ENCODE measurements at regions of chr19 and their contacts with region 1.

Region 1: DNA sequence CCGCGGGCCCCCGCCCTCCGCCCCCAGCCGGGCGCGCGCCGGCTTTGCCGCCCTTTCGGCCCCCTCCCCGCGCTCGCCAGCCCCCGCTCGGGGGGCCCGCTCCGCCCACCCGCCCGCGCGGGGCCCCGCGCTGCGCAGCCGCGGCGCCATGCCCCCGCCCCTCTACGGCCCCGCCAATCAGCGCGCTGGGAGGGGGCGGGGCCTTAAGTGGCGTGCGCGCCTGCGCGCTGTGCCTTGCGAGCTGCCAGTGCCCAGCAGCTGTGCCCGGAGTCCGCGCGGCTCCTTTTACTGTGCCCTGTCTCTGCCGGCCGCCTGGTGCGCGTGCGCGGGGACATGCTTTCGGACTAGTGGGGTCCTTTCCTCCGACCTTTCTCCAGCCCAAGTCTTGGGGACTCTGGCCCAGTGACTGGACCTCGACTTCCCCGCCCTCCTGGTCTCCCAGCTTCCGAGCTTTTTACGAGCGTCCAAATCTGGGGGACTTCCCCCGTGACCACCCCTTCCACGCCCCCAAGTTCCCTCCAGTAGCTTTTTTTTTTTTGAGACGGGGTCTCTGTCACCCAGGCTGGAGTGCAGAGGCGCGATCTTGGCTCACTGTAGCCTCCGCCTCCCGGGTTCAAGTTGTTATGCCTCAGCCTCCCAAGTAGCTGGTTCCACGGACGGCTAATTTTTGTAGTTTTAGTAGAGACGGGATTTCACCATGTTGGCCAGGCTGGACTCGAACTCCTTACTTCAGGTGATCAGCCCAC is at the start of gene MBD3:
- DNase-seq: peak; percentile 97
- H3K4me3 Mint-ChIP-seq: peak within 1 kb of the TSS; percentile 95
- H3K27ac Mint-ChIP-seq: peak within 1 kb of the TSS; percentile 91
- H3K4me1 Mint-ChIP-seq: peaks cover 17% of the 10 kb centered on the region
- H3K27me3 Mint-ChIP-seq: no peaks in the 10 kb centered on the region
- total RNA-seq, gene MBD3: 132 and 140 TPM in 2 replicates

Region 2: DNA sequence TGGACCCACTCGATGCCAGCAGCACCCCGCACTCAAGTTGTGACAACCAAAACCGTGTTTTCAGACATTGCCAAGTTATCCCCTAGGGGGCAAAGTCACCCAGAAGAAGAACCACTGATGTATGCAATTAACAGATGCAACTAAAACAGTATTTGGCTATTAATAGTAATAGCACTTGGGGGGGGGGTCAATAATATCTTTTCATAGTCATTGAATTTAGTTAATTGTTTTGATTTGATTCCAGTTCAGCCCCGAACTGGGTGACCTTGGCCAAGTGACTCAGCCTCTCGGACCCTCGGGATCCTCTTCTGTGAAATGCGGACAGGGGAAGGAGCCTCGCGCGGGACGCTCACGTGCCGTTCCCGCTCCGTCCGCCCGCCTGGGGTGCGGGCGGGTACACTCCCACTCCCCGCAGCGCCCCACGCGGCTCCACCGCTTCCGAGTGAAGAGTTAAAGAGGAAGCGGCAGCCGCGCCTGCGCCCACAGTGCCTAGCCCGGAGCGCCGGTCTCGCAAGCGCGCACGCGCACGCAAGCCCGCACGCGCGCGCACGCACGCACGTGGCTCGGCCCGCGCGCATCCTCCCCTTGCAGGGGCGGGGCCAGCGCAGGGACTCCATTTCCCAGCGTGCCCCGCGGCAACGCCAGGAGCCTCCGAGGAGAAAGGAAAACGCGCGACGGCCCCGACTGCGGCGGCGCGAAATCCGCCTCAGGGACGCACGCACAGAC is 186.0 kb before region 1 on chr19:
- intact Hi-C with region 1: loop called (anchors 1 kb)
- DNase-seq: peak; percentile 100
- H3K4me3 Mint-ChIP-seq: peak overlapping the region; percentile 76
- H3K27ac Mint-ChIP-seq: peak overlapping the region; percentile 81
- H3K4me1 Mint-ChIP-seq: peaks cover 37% of the 10 kb centered on the region
- H3K27me3 Mint-ChIP-seq: peaks cover 6% of the 10 kb centered on the region

Region 3: DNA sequence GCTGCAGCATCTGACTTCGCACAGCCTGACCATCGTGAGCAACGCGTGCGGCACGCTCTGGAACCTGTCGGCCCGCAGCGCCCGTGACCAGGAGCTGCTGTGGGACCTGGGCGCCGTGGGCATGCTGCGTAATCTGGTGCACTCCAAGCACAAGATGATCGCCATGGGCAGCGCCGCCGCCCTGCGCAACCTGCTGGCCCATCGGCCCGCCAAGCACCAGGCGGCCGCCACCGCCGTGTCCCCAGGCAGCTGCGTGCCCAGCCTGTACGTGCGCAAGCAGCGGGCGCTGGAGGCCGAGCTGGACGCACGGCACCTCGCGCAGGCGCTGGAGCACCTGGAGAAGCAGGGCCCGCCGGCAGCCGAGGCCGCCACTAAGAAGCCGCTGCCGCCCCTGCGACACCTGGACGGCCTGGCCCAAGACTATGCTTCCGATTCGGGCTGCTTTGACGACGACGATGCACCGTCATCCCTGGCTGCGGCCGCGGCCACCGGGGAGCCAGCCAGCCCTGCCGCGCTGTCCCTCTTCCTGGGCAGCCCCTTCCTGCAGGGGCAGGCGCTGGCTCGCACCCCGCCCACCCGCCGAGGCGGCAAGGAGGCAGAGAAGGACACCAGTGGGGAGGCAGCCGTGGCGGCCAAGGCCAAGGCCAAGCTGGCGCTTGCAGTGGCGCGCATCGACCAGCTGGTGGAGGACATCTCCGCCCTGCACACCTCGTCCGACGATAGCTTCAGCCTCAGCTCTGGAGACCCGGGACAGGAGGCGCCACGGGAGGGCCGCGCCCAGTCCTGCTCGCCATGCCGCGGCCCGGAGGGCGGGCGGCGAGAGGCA is 127.5 kb before region 1 on chr19:
- intact Hi-C with region 1: no loop called
- DNase-seq: peak; percentile 72
- H3K4me3 Mint-ChIP-seq: no peak overlapping the region
- H3K27ac Mint-ChIP-seq: no peak overlapping the region
- H3K4me1 Mint-ChIP-seq: no peaks in the 10 kb centered on the region
- H3K27me3 Mint-ChIP-seq: peaks cover 1% of the 10 kb centered on the region

Region 4: DNA sequence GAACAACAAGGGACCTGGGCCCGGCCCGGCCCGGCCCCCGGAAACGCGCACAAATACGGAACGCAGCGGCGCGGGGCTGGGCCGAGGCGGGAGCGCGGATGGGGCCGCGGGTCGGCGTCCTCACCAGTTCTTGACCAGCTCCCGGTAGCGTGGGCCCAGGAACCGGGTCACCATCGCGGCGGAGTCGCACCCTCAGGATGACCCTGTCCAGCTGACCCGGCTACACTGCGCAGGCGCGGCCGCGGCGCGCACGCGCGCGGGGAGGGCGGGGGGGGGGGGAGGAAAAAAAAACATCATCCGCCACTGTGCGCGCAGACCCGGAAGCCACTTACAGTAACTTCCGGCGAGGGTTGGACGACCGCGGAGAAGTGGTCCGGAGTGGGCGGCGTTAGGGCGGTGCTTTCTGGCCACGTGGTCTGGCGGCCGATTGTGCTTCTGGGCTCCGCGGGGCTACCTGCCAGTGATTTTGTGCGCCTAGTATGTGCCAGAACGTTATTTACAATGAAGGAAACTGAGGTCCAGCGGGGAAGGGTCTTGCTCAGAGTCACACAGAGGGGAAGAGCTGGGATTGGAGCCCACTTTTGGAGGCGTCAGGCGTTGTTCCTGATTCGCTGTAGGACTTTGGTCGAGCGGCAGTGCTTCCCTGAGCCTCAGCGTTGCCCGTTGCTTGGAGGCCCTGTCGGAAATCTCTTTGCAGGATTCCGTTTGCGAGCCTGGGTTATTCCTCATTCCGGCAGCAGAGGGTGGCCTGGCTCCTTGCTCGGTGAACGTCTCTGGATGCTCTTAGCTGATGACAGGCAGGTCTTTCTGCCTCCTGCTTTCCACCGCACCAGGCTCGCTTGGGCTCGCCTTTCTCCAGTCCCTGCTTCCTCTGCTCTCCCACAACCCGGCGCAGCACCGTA is 12.6 kb after region 1 on chr19 and contains the start of gene UQCR11:
- intact Hi-C with region 1: loop called (anchors 1 kb)
- DNase-seq: peak; percentile 98
- H3K4me3 Mint-ChIP-seq: peak within 1 kb of the TSS; percentile 95
- H3K27ac Mint-ChIP-seq: peak within 1 kb of the TSS; percentile 99
- H3K4me1 Mint-ChIP-seq: peaks cover 24% of the 10 kb centered on the region
- H3K27me3 Mint-ChIP-seq: no peaks in the 10 kb centered on the region
- total RNA-seq, gene UQCR11: 194 and 195 TPM in 2 replicates

Region 5: DNA sequence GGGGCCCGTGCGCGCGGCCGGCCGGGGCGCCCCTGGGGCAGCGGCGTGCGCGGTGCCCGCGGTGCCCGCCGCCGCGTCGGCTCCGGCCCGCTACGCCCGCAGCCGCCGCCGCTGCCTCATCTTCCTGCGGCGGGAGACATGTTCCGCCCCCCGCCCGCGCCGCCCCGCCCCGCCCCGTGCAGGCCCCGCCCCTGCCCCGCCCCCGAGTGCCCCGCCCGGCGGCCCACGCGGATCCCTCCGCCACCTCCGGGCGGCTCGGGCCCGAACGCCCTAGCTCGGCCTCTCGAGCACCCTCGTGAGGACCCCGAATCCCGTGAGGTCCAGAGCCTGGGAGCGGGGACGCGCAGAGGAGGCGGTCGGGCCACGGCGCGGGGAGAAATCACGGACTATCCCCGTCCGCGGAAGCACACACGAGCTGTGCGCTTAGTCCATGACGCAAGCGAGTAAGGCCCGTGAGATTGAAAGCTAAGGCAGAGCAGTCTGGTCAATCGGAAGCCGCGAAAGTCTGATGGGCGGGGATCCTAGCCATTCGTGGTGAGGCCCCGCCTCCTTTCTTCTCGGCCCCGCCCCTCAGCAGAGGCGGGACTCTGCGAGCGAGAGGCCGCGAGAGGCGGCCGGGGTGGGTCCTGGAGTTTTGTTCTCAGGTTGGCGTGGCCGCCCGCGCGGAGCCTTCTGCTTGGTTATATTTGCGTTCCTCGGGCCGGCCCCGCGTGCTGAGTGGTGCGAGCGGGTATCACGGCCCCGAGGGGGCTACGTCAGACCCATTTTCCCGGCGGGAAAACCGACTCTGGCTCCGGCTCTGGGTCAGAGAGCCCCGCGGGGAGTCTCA is 59.8 kb after region 1 on chr19 and contains the start of gene TCF3:
- intact Hi-C with region 1: loop called (anchors 5 kb)
- DNase-seq: peak; percentile 100
- H3K4me3 Mint-ChIP-seq: peak within 1 kb of the TSS; percentile 94
- H3K27ac Mint-ChIP-seq: peak within 1 kb of the TSS; percentile 93
- H3K4me1 Mint-ChIP-seq: peaks cover 17% of the 10 kb centered on the region
- H3K27me3 Mint-ChIP-seq: no peaks in the 10 kb centered on the region
- total RNA-seq, gene TCF3: 147 and 154 TPM in 2 replicates

Region 6: GRCh38 chr19:1812469-1813196 is 219.7 kb after region 1 on chr19:
- intact Hi-C with region 1: loop called (anchors 5 kb)
- DNase-seq: peak; percentile 98
- H3K4me3 Mint-ChIP-seq: peak overlapping the region; percentile 93
- H3K27ac Mint-ChIP-seq: peak overlapping the region; percentile 94
- H3K4me1 Mint-ChIP-seq: peaks cover 13% of the 10 kb centered on the region
- H3K27me3 Mint-ChIP-seq: no peaks in the 10 kb centered on the region